ENCODE measurements at regions of chr1 and their contacts with region 1.

Region 1: GRCh38 chr1:46442317-46443161 is 47.1 kb upstream of the DMBX1 start:
- ATAC-seq: peak; percentile 67 to 92 (median 78)
- H3K4me3 ChIP-seq: peak overlapping the region in 2 of 5 donors; percentile 5 to 9
- H3K27ac ChIP-seq: no peak overlapping the region
- H3K4me1 ChIP-seq: no peaks in the 10 kb centered on the region

Region 2: DNA sequence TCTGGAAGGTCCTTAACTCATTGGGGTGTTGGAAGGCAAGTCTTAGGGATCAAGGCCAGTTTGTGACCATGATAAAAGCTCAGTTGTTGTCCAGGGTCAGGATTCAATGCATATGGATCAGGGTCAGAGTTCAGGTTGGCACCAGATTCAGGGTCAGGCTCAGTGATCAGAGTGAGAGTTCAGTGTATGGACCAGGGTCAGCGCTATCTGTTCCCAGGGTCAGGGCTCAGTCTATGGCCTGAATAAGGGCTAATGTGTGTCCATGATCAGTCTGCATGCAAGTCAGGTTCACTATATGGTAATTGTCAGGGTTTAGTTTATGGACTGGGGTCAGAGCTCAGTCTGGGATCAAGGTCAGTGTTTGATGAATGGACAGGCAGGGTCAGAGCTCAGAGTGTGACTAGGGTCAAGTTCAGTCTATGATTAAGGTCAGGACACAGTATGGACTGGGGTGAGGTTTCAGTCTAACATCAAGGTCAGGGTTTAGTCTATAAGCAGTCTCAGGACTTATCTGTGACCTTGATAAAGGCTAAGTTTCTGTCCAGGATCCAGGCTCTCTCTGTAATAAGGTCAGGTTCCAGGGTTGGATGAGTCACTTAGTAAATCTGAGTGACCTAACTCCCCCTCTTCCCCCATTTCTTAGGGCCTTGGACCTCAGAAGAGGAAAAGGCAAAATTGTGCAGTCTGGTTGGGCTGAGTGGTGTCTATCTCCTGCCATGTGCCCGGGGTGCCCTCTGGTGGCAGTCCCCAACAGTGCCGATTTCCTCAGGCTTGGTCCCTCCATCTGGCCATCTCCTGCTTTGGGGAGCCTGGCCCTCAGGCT is 85.1 kb after region 1 on chr1:
- in situ Hi-C with region 1: loop called in 7 of 9 experiments (anchors 10 to 25 kb)
- ATAC-seq: peak; percentile 51 to 88 (median 69)
- H3K4me3 ChIP-seq: no peak overlapping the region
- H3K27ac ChIP-seq: no peak overlapping the region
- H3K4me1 ChIP-seq: peaks cover 5 to 7% of the 10 kb centered on the region in 2 donors

Region 3: DNA sequence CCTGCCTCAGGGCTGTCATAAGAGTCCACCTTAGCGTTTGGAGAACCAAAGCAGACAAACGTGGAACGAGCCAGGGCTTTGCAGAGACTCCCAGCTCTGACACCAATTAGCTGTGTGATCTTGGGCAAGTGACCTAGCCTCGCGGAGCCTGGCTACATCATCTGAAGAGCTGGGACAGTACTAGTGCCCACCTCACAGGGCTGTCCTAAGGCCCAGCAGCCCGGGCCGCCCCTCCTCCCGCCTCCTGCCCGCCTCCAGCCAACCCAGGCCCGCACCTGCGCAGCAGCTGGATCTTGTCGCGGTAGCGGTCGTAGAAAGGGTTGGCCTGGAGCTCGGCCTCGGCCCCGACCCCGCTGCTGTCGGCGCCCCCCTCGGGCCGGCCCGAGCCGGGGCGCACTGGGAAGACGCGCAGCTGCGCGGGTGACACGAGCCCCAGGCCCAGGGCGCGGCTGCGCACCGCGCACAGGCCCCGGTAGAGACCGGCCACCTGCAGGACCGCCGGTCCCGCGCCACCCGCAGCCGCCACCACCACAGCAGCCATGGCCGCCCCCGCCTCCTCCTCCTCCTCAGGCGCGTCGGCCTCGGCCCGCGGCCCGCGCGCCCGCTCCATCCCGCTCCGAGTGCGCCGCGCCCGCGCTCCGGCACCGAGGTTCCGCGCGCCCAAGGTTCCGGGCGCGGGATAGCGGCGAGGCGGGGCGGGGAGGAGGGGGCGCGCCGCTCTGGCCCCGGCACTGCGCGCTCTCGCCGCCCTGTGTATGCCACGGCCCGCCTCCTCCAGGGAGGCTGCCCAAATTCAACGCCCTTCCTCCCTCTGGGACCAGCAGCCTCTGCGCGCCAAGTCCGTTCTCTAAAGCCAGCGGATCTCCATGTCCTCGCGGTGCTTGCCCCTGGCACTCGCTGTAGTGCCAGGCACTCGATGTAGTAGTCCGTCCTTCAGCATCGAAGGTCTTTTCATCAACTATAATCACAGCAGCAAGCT is 225.5 kb after region 1 on chr1 and contains the start of gene ATPAF1:
- in situ Hi-C with region 1: no loop called
- ATAC-seq: peak; percentile 86 to 93 (median 91)
- H3K4me3 ChIP-seq: peak within 1 kb of the TSS; percentile 75 to 99 (median 92)
- H3K27ac ChIP-seq: peak within 1 kb of the TSS; percentile 33 to 78
- H3K4me1 ChIP-seq: peaks cover 9 to 10% of the 10 kb centered on the region in 2 donors
- total RNA-seq, gene ATPAF1: 39.9 to 77.6 (median 50.8) TPM

Region 4: GRCh38 chr1:46718727-46719622 is 276.4 kb after region 1 on chr1 and contains the start of gene EFCAB14:
- in situ Hi-C with region 1: loop called in 2 of 9 experiments (anchors 25 kb)
- ATAC-seq: peak; percentile 86 to 99 (median 96)
- H3K4me3 ChIP-seq: peak within 1 kb of the TSS; percentile 69 to 100 (median 82)
- H3K27ac ChIP-seq: peak within 1 kb of the TSS; percentile 19 to 70
- H3K4me1 ChIP-seq: peaks cover 18 to 22% of the 10 kb centered on the region in 2 donors
- total RNA-seq, gene EFCAB14: 14.5 to 56.9 (median 31.0) TPM

Measured in motor neuron (in vitro differentiated cells).